HEK293 (cell line): ENCODE measurements at regions of chr15 and their contacts with region 1.

Region 1: DNA sequence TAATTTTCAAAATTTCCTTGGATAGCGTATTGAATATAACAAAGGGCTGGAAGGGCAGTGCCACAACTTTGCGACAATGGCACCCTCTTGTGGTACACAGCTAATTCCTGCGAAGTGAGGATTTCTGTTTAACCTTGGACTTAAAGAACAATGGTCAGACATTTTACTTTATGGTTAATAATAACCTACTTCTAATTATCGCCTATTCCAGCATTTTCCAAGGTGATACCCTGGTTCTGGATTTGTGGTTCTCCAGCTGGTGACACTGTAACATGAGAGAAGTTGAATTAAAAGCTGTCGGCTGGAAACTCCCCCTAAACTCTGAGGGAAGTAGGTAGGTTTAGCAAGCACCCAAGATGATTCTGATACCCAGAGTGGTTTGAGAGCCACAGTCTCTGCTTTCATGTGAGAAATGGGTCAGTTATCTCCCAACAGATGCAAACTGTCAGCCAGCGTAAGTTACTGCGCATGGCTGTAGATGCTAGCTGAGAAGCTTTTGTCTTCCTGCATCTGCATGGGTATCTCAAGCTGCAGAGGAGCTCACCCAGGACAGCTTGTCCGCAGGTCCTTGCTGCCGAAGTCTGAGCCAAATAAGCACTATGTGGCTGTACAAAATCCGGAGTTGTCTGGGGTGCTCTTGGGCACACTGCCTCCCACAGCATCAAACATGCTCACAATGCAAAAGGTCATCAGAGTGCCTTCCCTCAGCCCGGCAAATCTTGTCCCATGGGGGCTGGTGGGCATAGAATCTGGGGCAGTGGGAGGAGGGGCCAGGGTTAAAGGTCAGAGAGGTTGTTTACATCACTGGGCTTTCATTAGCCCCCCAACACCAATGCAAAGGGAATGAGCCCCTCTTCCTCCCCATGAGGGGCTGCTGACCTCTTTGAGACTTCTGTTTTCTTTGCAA is 6.6 kb upstream of the CHSY1 start:
- H3K4me3 ChIP-seq: no peak overlapping the region
- H3K27ac ChIP-seq: no peak overlapping the region
- H3K4me1 ChIP-seq: no peaks in the 10 kb centered on the region
- CTCF ChIP-seq: peak; percentile 43; the same call in 1 of the 2 replicates

Region 2: GRCh38 chr15:100873029-100873677 is 385.3 kb before region 1 on chr15:
- CTCF ChIA-PET with region 1: no interaction called
- POLR2A ChIA-PET with region 1: no interaction called
- H3K4me3 ChIP-seq: no peak overlapping the region
- H3K27ac ChIP-seq: no peak overlapping the region
- H3K4me1 ChIP-seq: no peaks in the 10 kb centered on the region
- CTCF ChIP-seq: 0 out of 2 replicates have a peak, but pooled peaks have one; percentile 22

Region 3: GRCh38 chr15:101014921-101015841 is 243.3 kb before region 1 on chr15:
- CTCF ChIA-PET with region 1: interaction called, 223 read pairs
- POLR2A ChIA-PET with region 1: interaction called, 3 read pairs
- H3K4me3 ChIP-seq: no peak overlapping the region
- H3K27ac ChIP-seq: no peak overlapping the region
- H3K4me1 ChIP-seq: no peaks in the 10 kb centered on the region
- CTCF ChIP-seq: peak; percentile 88

Region 4: DNA sequence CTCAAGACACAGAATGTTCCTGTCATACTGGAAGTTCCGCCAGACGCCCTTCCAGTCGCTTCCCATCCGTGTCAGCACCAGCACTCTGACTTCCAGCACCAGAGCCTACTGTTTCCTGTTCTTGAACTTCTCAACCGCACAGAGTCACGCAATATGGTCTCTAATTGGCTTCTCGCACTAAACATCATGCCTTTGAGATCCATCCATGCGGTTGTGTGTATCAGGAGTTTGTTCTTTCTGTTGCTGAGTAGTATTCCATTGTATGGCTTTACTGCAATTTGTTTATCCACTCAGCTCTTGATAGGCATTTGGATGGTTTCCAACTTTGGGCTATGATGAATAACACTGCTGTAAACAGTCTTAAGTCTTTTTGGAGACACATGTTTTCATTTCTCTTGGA is 227.3 kb before region 1 on chr15:
- CTCF ChIA-PET with region 1: interaction called, 13 read pairs
- POLR2A ChIA-PET with region 1: no interaction called
- H3K4me3 ChIP-seq: no peak overlapping the region
- H3K27ac ChIP-seq: no peak overlapping the region
- H3K4me1 ChIP-seq: no peaks in the 10 kb centered on the region
- CTCF ChIP-seq: no peak

Region 5: DNA sequence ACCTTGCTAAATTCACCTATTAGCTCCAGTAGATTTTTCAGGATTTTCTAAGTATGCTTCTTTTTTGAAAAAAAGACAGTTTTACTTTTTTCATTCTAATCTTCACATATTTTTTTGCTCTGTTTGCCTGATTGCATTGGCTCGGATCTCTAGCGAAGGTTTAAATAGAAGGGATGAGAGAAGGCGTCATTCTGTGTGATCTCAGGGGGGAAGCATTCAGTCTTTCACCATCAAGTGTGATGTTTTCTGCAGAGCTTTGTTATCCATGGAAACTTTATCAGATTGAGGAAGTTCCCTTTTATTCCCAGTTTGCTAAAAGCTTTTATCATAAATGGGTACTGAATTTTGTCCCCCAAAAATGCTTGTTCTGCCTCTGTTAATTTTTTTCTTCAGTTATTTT is 219.0 kb before region 1 on chr15:
- CTCF ChIA-PET with region 1: interaction called, 13 read pairs
- POLR2A ChIA-PET with region 1: no interaction called
- H3K4me3 ChIP-seq: no peak overlapping the region
- H3K27ac ChIP-seq: no peak overlapping the region
- H3K4me1 ChIP-seq: no peaks in the 10 kb centered on the region
- CTCF ChIP-seq: no peak

Region 6: GRCh38 chr15:101088788-101089583 is 169.5 kb before region 1 on chr15:
- CTCF ChIA-PET with region 1: interaction called, 78 read pairs
- POLR2A ChIA-PET with region 1: no interaction called
- H3K4me3 ChIP-seq: no peak overlapping the region
- H3K27ac ChIP-seq: no peak overlapping the region
- H3K4me1 ChIP-seq: no peaks in the 10 kb centered on the region
- CTCF ChIP-seq: peak; percentile 81

Region 7: DNA sequence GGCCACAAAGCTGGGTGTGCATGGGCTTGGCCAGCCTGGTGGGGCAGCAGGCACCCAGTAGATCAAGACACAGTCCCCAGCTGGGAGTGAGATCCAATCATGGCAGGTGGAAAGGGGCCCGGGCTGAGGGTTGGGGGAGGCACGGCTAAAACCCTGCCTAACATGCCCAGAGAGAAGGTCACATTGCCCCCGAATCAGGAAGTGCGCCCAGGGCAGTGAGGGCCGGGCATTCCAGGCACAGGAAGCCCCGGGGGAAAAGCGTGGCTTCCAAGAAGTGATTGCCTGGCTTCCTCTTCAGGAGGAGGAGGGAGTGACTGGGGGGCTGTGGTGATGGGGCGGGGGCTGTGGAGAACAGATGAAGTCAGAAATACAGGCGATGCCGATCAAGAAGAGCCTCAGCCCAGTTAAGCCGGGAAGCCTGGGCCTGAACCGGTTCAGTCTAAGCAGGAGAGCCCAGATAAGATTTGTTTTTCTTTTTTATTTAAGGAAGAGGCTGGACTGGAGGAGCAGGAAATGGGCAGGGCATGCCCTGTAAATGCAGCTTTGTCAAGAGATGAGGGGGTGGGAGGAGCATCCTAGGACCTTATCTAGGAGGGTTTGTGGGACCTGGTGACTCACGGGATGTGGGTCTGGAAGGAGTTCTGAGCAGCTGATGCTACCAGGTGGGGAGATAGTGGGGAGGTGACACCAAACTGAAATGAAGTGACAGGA is 90.6 kb before region 1 on chr15:
- CTCF ChIA-PET with region 1: no interaction called
- POLR2A ChIA-PET with region 1: no interaction called
- H3K4me3 ChIP-seq: no peak overlapping the region
- H3K27ac ChIP-seq: no peak overlapping the region
- H3K4me1 ChIP-seq: peaks cover 4% of the 10 kb centered on the region; the same call in 1 of the 2 replicates
- CTCF ChIP-seq: no peak

Region 8: DNA sequence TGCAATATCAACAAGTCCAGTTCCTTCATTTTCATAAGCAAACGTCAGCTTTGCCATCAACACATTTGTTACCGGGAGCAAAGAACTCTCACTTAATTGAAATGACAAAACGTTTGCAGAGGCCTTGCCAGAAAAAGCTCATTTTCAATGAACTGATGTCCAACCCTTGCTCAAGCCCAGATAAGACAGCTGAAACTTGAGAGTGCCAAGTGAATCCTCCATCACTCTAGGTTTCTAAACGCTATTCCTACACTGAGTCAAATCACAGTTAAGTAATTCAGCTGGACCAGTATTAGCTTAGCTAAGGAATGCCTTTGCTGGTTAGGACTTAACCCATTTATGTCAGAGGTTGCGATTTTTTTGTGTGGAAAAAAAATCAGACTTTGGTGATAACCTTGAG is 18.1 kb before region 1 on chr15:
- CTCF ChIA-PET with region 1: interaction called, 13 read pairs
- POLR2A ChIA-PET with region 1: no interaction called
- H3K4me3 ChIP-seq: no peak overlapping the region
- H3K27ac ChIP-seq: no peak overlapping the region
- H3K4me1 ChIP-seq: peaks cover 22% of the 10 kb centered on the region; the same call in 1 of the 2 replicates
- CTCF ChIP-seq: no peak

Region 9: DNA sequence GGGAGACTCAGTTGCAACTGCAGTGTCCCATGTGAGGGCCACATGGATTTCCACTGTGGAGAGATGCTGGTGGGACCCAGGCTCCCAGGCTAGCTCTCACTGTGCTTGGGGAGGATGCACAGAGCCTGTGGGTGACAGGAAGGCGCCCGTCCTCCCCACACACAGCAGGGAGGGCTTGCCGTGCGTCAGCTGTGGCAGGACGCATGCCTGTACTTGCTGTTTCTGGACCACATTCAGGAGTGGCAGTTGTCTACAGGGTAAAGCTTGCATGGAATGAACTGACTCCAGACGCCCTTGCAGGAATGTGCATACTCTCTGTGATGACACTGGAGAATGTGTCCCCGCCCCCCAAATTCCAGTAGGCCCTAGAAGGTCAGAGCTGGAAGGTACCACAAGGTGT is 100.4 kb after region 1 on chr15:
- CTCF ChIA-PET with region 1: no interaction called
- POLR2A ChIA-PET with region 1: no interaction called
- H3K4me3 ChIP-seq: no peak overlapping the region
- H3K27ac ChIP-seq: no peak overlapping the region
- H3K4me1 ChIP-seq: no peaks in the 10 kb centered on the region
- CTCF ChIP-seq: no peak